IMR-90 (cell line): ENCODE measurements at regions of chr1 and their contacts with region 1.

Region 1: DNA sequence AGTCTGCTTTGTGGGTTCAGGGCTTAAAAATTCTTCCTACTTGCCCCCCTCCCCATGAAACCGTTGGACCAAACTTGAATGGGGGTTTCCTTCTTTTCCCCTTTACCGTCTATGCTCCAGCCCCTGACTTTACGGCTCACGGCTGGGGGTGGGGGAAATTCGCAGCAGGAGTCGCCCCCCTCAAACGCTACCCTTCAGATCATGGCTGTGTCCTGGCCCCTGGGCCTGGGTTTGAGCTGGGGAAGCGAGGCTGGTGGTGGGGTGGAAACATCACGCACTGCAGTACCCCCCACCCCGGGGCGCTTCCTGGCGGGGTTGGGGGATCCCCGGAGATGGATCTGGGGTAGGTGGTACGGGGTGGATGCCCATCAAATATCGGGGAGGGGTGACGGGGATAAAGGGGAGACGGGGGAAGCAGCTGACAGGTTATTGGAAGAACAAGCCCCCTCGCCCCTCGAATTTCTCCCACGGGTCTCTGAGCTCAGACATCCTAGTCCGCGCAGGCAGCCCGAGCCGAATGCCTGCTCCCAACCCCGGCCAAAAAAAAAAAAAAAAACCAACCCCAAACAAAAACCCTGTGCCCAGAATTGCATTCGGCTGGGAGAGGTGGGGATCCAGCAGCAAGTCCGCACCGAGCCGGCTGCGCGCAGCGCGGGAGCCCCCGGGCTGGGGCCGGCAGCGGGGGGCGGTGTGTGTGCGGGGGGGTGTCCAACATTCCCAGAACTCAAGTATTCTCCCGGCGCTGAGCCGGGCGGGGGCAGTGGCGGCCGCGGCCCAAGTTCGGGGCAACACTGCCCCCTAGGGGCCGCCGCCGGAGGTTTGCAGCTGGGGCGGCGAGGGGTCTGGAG is 59.0 kb upstream of the ACOT11 start:
- DNase-seq: peak; percentile 49
- ATAC-seq: peak; percentile 64
- H3K4me3 ChIP-seq: peak overlapping the region; percentile 46
- H3K27ac ChIP-seq: peak overlapping the region; percentile 88
- H3K4me1 ChIP-seq: peaks cover 14% of the 10 kb centered on the region
- H3K27me3 ChIP-seq: no peaks in the 10 kb centered on the region; the same call in 1 of the 2 replicates
- CTCF ChIP-seq: peak; percentile 92
- POLR2A ChIP-seq: peak; percentile 59
- RAD21 ChIP-seq: peak; percentile 90

Region 2: DNA sequence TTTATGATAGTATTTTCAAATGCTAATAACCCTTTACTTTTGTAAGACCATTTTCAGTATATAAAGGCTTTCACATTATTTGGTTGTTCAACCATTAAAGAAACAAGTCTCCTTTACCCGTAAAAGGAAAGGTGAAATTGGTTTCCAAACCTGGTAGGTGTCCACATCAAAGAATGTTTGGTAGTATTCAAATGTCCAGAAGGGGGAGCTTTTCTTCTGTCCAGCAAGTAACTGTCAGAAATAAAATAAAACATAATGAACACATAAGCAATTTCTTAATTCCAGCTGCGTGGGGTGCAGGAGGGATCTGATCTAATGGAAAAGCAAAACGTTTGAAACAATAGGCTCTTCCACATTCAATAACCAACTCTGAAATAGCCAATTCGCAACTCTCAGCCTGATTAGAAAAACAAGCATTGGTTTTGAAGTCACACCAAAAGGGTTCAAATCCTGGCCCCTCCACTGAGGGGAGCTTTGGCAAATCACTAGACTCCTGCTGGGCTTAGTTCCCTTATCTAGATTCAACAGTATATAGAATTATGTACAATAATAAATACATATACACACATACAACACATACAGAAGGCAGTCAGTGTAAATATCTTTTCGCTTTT is 610.4 kb before region 1 on chr1:
- CTCF ChIA-PET with region 1: no interaction called
- POLR2A ChIA-PET with region 1: no interaction called
- dilution Hi-C with region 1: no loop called
- in situ Hi-C with region 1: loop called (anchors 25 kb)
- intact Hi-C with region 1: loop called (anchors 5 kb)
- DNase-seq: peak; percentile 69
- ATAC-seq: peak; percentile 65
- H3K4me3 ChIP-seq: no peak overlapping the region
- H3K27ac ChIP-seq: no peak overlapping the region
- H3K4me1 ChIP-seq: no peaks in the 10 kb centered on the region
- H3K27me3 ChIP-seq: no peaks in the 10 kb centered on the region
- CTCF ChIP-seq: peak; percentile 67
- POLR2A ChIP-seq: no peak
- RAD21 ChIP-seq: peak; percentile 72

Region 3: DNA sequence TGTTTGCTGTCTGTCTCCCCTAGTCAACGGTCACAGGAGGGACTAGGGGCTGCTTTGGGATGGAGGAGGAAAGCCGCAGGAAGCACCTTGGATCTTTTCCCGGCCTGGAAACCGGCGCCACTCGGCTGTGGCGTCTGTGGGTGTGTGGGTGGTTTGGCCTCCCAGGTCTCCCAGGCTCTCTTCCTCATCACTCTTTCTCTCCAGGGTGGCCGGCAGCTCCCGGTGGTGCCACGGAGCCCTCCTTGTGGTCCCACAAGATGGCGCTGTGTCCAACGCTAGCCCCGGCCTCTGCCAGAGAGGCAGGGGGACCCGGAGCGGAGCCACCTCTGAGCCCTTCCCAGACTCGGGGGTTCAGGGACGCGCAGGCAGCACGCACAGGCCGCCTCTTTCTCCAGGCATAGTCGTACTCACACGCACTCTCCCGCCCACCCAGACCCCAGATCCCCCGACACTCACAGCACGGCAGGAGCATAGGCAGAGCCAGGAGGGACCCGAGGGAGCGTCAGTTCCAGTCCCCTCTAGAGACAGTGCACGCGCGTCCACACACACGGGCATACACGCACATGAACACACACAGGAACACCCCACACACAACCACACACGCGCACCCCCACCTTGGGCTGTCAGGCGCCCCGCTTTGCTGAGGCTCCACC is 367.4 kb before region 1 on chr1:
- CTCF ChIA-PET with region 1: interaction called, 5 read pairs
- POLR2A ChIA-PET with region 1: no interaction called
- dilution Hi-C with region 1: no loop called
- in situ Hi-C with region 1: loop called (anchors 10 kb)
- intact Hi-C with region 1: loop called (anchors 1 kb)
- DNase-seq: peak; percentile 82
- ATAC-seq: peak; percentile 90
- H3K4me3 ChIP-seq: peak overlapping the region; percentile 13; the same call in 1 of the 2 replicates
- H3K27ac ChIP-seq: no peak overlapping the region; the same call in 1 of the 2 replicates
- H3K4me1 ChIP-seq: peaks cover 9% of the 10 kb centered on the region
- H3K27me3 ChIP-seq: no peaks in the 10 kb centered on the region; the same call in 1 of the 2 replicates
- CTCF ChIP-seq: peak; percentile 90
- POLR2A ChIP-seq: peak; percentile 44; the same call in 1 of the 2 replicates
- RAD21 ChIP-seq: peak; percentile 89

Region 4: GRCh38 chr1:54249819-54250435 is 239.1 kb before region 1 on chr1:
- CTCF ChIA-PET with region 1: no interaction called
- POLR2A ChIA-PET with region 1: no interaction called
- dilution Hi-C with region 1: no loop called
- in situ Hi-C with region 1: no loop called
- intact Hi-C with region 1: loop called (anchors 5 kb)
- DNase-seq: peak; percentile 54
- ATAC-seq: no peak
- H3K4me3 ChIP-seq: no peak overlapping the region
- H3K27ac ChIP-seq: no peak overlapping the region
- H3K4me1 ChIP-seq: peaks cover 19% of the 10 kb centered on the region
- H3K27me3 ChIP-seq: no peaks in the 10 kb centered on the region
- CTCF ChIP-seq: no peak
- POLR2A ChIP-seq: no peak
- RAD21 ChIP-seq: no peak

Region 5: GRCh38 chr1:54310439-54311328 is 178.3 kb before region 1 on chr1:
- CTCF ChIA-PET with region 1: interaction called, 3 read pairs
- POLR2A ChIA-PET with region 1: interaction called, 5 read pairs
- dilution Hi-C with region 1: no loop called
- in situ Hi-C with region 1: no loop called
- intact Hi-C with region 1: loop called (anchors 1 kb)
- DNase-seq: peak; percentile 39
- ATAC-seq: peak; percentile 50
- H3K4me3 ChIP-seq: no peak overlapping the region
- H3K27ac ChIP-seq: no peak overlapping the region
- H3K4me1 ChIP-seq: peaks cover 20% of the 10 kb centered on the region
- H3K27me3 ChIP-seq: no peaks in the 10 kb centered on the region
- CTCF ChIP-seq: peak; percentile 58
- POLR2A ChIP-seq: no peak
- RAD21 ChIP-seq: peak; percentile 79

Region 6: GRCh38 chr1:54406339-54407153 is 82.5 kb before region 1 on chr1 and contains the start of gene SSBP3:
- CTCF ChIA-PET with region 1: interaction called, 3 read pairs
- POLR2A ChIA-PET with region 1: interaction called, 5 read pairs
- dilution Hi-C with region 1: no loop called
- in situ Hi-C with region 1: loop called (anchors 5 kb)
- intact Hi-C with region 1: loop called (anchors 1 kb)
- DNase-seq: peak; percentile 88
- ATAC-seq: peak; percentile 92
- H3K4me3 ChIP-seq: peak within 1 kb of the TSS; percentile 92
- H3K27ac ChIP-seq: peak within 1 kb of the TSS; percentile 94
- H3K4me1 ChIP-seq: peaks cover 22% of the 10 kb centered on the region
- H3K27me3 ChIP-seq: no peaks in the 10 kb centered on the region
- CTCF ChIP-seq: no peak
- POLR2A ChIP-seq: peak; percentile 44; the same call in 1 of the 2 replicates
- RAD21 ChIP-seq: peak; percentile 3; the same call in 1 of the 2 replicates
- total RNA-seq, gene SSBP3: 9.7 and 10.9 TPM in 2 replicates

Region 7: GRCh38 chr1:54439550-54440223 is 49.3 kb before region 1 on chr1:
- CTCF ChIA-PET with region 1: no interaction called
- POLR2A ChIA-PET with region 1: no interaction called
- dilution Hi-C with region 1: no loop called
- in situ Hi-C with region 1: no loop called
- intact Hi-C with region 1: no loop called
- DNase-seq: no peak
- ATAC-seq: no peak
- H3K4me3 ChIP-seq: no peak overlapping the region
- H3K27ac ChIP-seq: no peak overlapping the region
- H3K4me1 ChIP-seq: no peaks in the 10 kb centered on the region
- H3K27me3 ChIP-seq: peaks cover 2% of the 10 kb centered on the region; the same call in 1 of the 2 replicates
- CTCF ChIP-seq: no peak
- POLR2A ChIP-seq: no peak
- RAD21 ChIP-seq: no peak

Region 8: DNA sequence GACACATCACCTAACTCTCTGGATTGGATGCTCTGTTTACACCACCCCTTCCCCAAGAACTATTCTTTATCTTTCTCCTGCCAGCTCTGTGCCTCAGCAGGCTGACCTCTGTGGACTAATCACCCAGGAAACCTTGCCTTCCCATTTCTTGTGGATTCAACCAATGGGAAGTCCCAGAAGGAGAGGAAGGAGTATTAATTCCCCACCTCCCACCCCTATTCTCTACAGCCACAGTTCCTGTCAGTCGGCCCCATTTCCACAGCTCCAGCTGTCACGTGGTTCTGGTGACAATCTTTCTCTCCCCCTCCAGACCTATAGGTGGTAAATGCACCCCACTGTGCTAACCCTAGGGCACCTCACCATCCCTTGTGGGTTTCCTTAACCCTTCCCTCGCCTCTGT is 36.0 kb before region 1 on chr1:
- CTCF ChIA-PET with region 1: no interaction called
- POLR2A ChIA-PET with region 1: no interaction called
- dilution Hi-C with region 1: no loop called
- in situ Hi-C with region 1: no loop called
- intact Hi-C with region 1: no loop called
- DNase-seq: no peak
- ATAC-seq: no peak
- H3K4me3 ChIP-seq: no peak overlapping the region
- H3K27ac ChIP-seq: no peak overlapping the region
- H3K4me1 ChIP-seq: no peaks in the 10 kb centered on the region
- H3K27me3 ChIP-seq: peaks cover 8% of the 10 kb centered on the region
- CTCF ChIP-seq: no peak
- POLR2A ChIP-seq: no peak
- RAD21 ChIP-seq: no peak

Region 9: DNA sequence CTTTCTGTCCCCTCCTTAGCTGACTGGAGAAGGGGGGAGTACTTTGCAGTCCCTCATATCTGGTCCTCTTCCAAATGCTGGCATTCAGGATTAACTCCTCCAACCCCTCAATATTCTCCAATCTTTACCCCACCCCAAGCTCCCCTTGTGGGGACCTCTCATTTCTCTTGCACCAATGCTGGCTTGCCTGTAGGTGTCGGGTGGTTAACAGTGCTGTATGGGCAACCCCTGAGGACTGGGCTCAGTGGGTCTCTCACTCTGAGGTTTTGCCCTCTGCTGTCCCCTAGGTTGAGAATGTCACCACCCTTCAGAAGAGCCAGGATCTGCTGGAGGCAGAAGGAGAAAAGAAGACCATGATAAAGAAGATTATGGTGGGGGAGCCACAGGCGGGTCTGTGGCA is 179.6 kb after region 1 on chr1:
- CTCF ChIA-PET with region 1: no interaction called
- POLR2A ChIA-PET with region 1: no interaction called
- dilution Hi-C with region 1: no loop called
- in situ Hi-C with region 1: no loop called
- intact Hi-C with region 1: no loop called
- DNase-seq: no peak
- ATAC-seq: no peak
- H3K4me3 ChIP-seq: no peak overlapping the region
- H3K27ac ChIP-seq: no peak overlapping the region
- H3K4me1 ChIP-seq: no peaks in the 10 kb centered on the region
- H3K27me3 ChIP-seq: peaks cover 24% of the 10 kb centered on the region
- CTCF ChIP-seq: no peak
- POLR2A ChIP-seq: no peak
- RAD21 ChIP-seq: no peak